AG04450 (cell line): ENCODE measurements at regions of chr21 and their contacts with region 1.

Region 1: DNA sequence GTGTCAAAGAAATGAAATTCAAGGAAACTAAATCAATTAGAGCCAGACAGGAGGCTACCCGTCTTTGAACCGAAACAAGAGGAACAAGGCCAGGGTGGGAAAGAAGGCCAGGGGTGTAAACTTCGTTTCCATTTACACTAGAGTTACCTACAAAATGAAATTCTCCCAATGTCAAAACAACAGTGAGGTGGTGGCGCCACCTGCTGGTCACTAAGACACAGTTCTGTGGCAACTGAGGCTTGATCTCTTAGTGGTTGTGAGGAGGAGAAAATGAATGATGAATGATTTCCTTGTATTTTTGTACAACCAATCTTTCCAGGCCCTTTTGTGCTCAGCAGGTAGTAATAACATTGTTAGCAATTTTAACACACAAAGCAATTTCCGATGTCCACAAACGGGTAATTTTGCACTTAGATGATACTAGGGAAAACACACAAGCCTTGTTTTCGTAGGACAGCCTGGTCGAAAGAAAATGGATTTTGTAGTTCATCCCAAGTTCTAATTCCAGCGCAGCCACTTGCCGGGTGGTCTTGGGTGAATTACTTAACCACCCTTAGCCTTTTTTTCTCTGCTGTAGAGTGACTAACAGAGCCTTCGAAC is 54.8 kb upstream of the SOD1 start:
- DNase-seq: peak; percentile 20
- H3K4me3 ChIP-seq: no peak overlapping the region
- H3K27ac ChIP-seq: no peak overlapping the region
- H3K27me3 ChIP-seq: no peaks in the 10 kb centered on the region
- CTCF ChIP-seq: peak; percentile 86

Region 2: GRCh38 chr21:31098576-31099005 is 506.1 kb before region 1 on chr21:
- CTCF ChIA-PET with region 1: interaction called, 23 read pairs
- POLR2A ChIA-PET with region 1: no interaction called
- DNase-seq: peak; percentile 10
- H3K4me3 ChIP-seq: no peak overlapping the region
- H3K27ac ChIP-seq: no peak overlapping the region
- H3K27me3 ChIP-seq: no peaks in the 10 kb centered on the region
- CTCF ChIP-seq: peak; percentile 91

Region 3: GRCh38 chr21:31198575-31198974 is 406.1 kb before region 1 on chr21:
- CTCF ChIA-PET with region 1: interaction called, 37 read pairs
- POLR2A ChIA-PET with region 1: no interaction called
- DNase-seq: peak; percentile 24
- H3K4me3 ChIP-seq: no peak overlapping the region
- H3K27ac ChIP-seq: no peak overlapping the region
- H3K27me3 ChIP-seq: no peaks in the 10 kb centered on the region
- CTCF ChIP-seq: peak; percentile 63

Region 4: GRCh38 chr21:31570824-31571566 is 33.7 kb before region 1 on chr21:
- CTCF ChIA-PET with region 1: no interaction called
- POLR2A ChIA-PET with region 1: no interaction called
- DNase-seq: no peak
- H3K4me3 ChIP-seq: no peak overlapping the region
- H3K27ac ChIP-seq: no peak overlapping the region
- H3K27me3 ChIP-seq: no peaks in the 10 kb centered on the region
- CTCF ChIP-seq: no peak

Region 5: DNA sequence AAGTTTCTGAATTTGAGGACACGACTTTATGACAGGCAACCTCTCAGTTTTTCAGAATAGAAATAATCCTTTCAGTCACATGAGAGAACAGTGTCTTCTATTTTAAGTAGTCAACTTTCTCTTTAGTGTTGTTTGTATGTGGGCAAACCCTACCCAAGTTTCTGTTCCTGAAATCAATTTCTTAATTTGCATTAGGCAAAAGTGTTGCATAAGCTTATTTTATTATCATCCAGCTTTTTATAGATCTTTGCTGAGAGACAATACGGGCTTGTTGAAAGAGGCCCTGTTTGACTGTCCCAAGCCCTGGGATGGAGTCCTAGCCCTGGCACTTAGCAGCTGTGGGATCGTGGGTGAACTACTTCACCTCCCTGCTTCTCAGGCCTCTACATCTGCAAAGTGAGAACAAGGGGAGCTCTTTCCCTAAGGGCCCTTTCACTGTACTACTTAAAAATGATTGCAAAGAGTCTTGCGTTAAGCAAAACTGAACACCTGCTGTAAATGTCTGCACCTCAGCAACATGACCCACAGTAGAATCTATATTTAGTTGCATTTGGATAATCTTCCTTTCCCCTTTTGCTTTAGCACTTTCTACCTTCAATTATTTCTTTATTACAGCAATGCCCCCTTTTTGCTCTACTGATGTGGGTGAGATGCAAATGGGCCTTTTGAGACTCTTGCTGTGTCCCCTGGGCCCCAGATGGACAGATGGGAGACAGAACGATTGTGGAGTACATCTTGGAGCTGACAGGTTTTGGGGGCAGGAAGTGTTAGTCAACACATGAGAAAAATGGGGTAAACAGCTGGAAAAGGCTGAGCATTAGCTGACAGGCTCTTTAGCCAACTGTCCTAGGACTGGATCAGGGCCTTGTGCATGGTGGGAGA is 168.2 kb after region 1 on chr21:
- CTCF ChIA-PET with region 1: no interaction called
- POLR2A ChIA-PET with region 1: no interaction called
- DNase-seq: no peak
- H3K4me3 ChIP-seq: no peak overlapping the region
- H3K27ac ChIP-seq: no peak overlapping the region
- H3K27me3 ChIP-seq: no peaks in the 10 kb centered on the region
- CTCF ChIP-seq: no peak